PC-3 (cell line): ENCODE measurements at regions of chr2 and their contacts with region 1.

Region 1: DNA sequence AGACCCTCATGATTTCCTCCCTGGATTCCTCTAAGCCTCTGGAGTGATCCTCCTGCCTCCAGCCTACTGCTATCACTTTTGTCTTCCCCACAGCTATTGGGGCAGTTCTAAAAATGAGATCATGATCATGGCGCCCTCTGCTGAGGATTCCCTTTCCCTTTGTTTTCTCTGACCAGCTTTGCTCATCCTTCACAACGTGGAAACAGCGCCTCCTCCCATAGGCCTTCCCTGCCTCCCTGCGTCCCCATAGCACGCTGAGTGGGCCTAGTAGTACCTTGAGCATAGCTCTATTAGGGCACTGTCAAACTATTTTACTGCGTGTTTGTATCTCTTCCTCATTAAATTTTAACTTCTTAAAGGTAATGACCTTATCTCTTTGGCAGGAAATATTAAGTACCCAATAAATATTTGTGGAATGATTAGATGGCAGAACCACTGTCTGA is 207.0 kb upstream of the FANCL start:
- DNase-seq: peak; percentile 84
- ATAC-seq: peak; percentile 88
- H3K4me3 ChIP-seq: peak overlapping the region; percentile 27; the same call in 1 of the 2 replicates
- H3K27ac ChIP-seq: peak overlapping the region; percentile 69
- H3K4me1 ChIP-seq: peaks cover 27% of the 10 kb centered on the region
- H3K27me3 ChIP-seq: no peaks in the 10 kb centered on the region
- CTCF ChIP-seq: peak; percentile 94

Region 2: GRCh38 chr2:57720728-57721627 is 727.1 kb before region 1 on chr2:
- CTCF ChIA-PET with region 1: interaction called, 3 read pairs
- POLR2A ChIA-PET with region 1: no interaction called
- intact Hi-C with region 1: loop called (anchors 1 kb)
- DNase-seq: peak; percentile 76
- ATAC-seq: peak; percentile 97
- H3K4me3 ChIP-seq: peak overlapping the region; percentile 45
- H3K27ac ChIP-seq: no peak overlapping the region
- H3K4me1 ChIP-seq: peaks cover 15% of the 10 kb centered on the region
- H3K27me3 ChIP-seq: no peaks in the 10 kb centered on the region
- CTCF ChIP-seq: peak; percentile 96

Region 3: GRCh38 chr2:57906152-57906732 is 541.8 kb before region 1 on chr2:
- CTCF ChIA-PET with region 1: interaction called, 5 read pairs
- POLR2A ChIA-PET with region 1: no interaction called
- intact Hi-C with region 1: loop called (anchors 1 kb)
- DNase-seq: peak; percentile 82
- ATAC-seq: peak; percentile 91
- H3K4me3 ChIP-seq: no peak overlapping the region
- H3K27ac ChIP-seq: no peak overlapping the region
- H3K4me1 ChIP-seq: peaks cover 28% of the 10 kb centered on the region
- H3K27me3 ChIP-seq: no peaks in the 10 kb centered on the region
- CTCF ChIP-seq: peak; percentile 93

Region 4: GRCh38 chr2:58131191-58132011 is 316.7 kb before region 1 on chr2:
- CTCF ChIA-PET with region 1: no interaction called
- POLR2A ChIA-PET with region 1: no interaction called
- intact Hi-C with region 1: loop called (anchors 2 kb)
- DNase-seq: no peak
- ATAC-seq: peak; percentile 43; the same call in 1 of the 2 replicates
- H3K4me3 ChIP-seq: no peak overlapping the region
- H3K27ac ChIP-seq: no peak overlapping the region
- H3K4me1 ChIP-seq: 0 out of 2 replicates have a peak, but pooled peaks cover 7% of the 10 kb centered on the region
- H3K27me3 ChIP-seq: no peaks in the 10 kb centered on the region
- CTCF ChIP-seq: peak; percentile 49

Region 5: GRCh38 chr2:58515827-58516573 is 67.9 kb after region 1 on chr2:
- CTCF ChIA-PET with region 1: no interaction called
- POLR2A ChIA-PET with region 1: no interaction called
- intact Hi-C with region 1: loop called (anchors 5 kb)
- DNase-seq: peak; percentile 12
- ATAC-seq: peak; percentile 36
- H3K4me3 ChIP-seq: peak overlapping the region; percentile 10; the same call in 1 of the 2 replicates
- H3K27ac ChIP-seq: peak overlapping the region; percentile 83
- H3K4me1 ChIP-seq: peaks cover 10% of the 10 kb centered on the region
- H3K27me3 ChIP-seq: no peaks in the 10 kb centered on the region
- CTCF ChIP-seq: no peak

Region 6: DNA sequence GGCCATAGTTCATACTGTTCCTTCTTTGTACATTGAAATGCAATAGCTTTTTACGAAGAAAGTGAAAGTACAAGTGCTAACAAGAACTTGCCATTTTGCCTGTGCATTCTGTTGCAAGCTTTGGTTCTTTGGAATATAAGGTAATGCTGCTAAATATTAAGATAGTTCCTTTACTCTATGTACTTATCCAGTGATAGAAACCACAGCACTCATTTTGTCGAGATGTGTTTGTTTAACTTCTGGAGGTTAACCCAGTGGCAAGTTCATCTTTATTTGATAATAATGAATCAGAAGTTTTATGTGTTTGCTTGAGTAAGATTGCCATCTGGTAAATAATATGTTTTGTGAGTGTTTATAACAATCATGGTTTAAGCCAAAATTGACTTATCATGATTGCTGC is 166.1 kb after region 1 on chr2:
- CTCF ChIA-PET with region 1: no interaction called
- POLR2A ChIA-PET with region 1: interaction called, 4 read pairs
- intact Hi-C with region 1: loop called (anchors 5 kb)
- DNase-seq: peak; percentile 93
- ATAC-seq: peak; percentile 96
- H3K4me3 ChIP-seq: peak overlapping the region; percentile 53
- H3K27ac ChIP-seq: peak overlapping the region; percentile 50
- H3K4me1 ChIP-seq: peaks cover 35% of the 10 kb centered on the region
- H3K27me3 ChIP-seq: no peaks in the 10 kb centered on the region
- CTCF ChIP-seq: no peak